ENCODE measurements at regions of chr7 and their contacts with region 1.

Region 1: GRCh38 chr7:98168181-98168905 is 42.9 kb upstream of the BHLHA15 start:
- DNase-seq: peak; percentile 71 to 82
- ATAC-seq: peak; percentile 68 to 75; a peak in 5 of 6 replicates
- H3K4me3 ChIP-seq: no peak overlapping the region
- H3K27ac ChIP-seq: no peak overlapping the region
- H3K4me1 ChIP-seq: peaks cover 3% of the 10 kb centered on the region; the same call in 1 of the 3 replicates
- CTCF ChIP-seq: peak; percentile 95
- EP300 ChIP-seq: no peak
- POLR2A ChIP-seq: no peak
- RAD21 ChIP-seq: peak; percentile 91 to 94

Region 2: GRCh38 chr7:98040626-98041360 is 127.5 kb before region 1 on chr7:
- CTCF ChIA-PET with region 1: interaction called, 10 read pairs
- POLR2A ChIA-PET with region 1: no interaction called
- DNase-seq: no peak
- ATAC-seq: no peak; a peak in 1 of 6 replicates
- H3K4me3 ChIP-seq: no peak overlapping the region
- H3K27ac ChIP-seq: no peak overlapping the region
- H3K4me1 ChIP-seq: no peaks in the 10 kb centered on the region
- CTCF ChIP-seq: no peak
- EP300 ChIP-seq: no peak
- POLR2A ChIP-seq: no peak
- RAD21 ChIP-seq: no peak

Region 3: GRCh38 chr7:98106647-98107445 is 61.5 kb before region 1 on chr7 and contains the start of gene LMTK2:
- CTCF ChIA-PET with region 1: interaction called, 80 read pairs
- POLR2A ChIA-PET with region 1: no interaction called
- DNase-seq: peak; percentile 77 to 93
- ATAC-seq: peak; percentile 97 to 98
- H3K4me3 ChIP-seq: peak within 1 kb of the TSS; percentile 90
- H3K27ac ChIP-seq: peak within 1 kb of the TSS; percentile 86 to 91
- H3K4me1 ChIP-seq: peaks cover 39% of the 10 kb centered on the region
- CTCF ChIP-seq: peak; percentile 94
- EP300 ChIP-seq: no peak
- POLR2A ChIP-seq: peak; percentile 92
- RAD21 ChIP-seq: peak; percentile 66 to 74
- polyA plus RNA-seq, gene LMTK2: 13.0 and 14.9 TPM in 2 replicates

Region 4: DNA sequence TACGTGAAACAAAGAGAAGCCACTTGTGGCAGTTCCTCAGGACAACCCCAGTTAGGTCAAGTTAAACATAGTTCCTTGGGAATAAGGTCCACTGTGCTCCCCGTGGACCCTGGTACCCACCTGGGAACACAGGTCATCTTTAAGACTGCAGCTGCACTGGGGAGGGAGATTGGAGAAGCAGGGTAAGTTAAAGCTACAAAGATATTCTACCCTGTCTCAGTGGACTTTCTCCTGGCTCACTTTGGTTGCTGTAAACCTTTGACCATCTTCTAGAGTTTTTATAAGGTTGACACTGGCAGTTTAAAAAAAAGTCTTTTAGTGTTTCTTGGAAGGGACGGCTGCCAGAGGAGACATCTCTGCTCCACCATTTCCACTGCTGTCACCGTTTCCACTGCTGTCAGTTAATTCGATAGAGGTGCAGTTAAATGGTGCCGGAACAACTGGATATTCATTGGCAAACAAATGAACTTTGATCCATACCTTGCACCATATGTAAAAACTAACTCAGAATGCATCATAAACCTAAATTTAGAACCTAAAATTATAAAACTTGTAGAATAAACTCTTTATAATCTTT is 19.1 kb before region 1 on chr7:
- CTCF ChIA-PET with region 1: interaction called, 37 read pairs
- POLR2A ChIA-PET with region 1: no interaction called
- DNase-seq: no peak
- ATAC-seq: no peak
- H3K4me3 ChIP-seq: no peak overlapping the region
- H3K27ac ChIP-seq: no peak overlapping the region
- H3K4me1 ChIP-seq: no peaks in the 10 kb centered on the region
- CTCF ChIP-seq: no peak
- EP300 ChIP-seq: no peak
- POLR2A ChIP-seq: no peak
- RAD21 ChIP-seq: no peak

Region 5: GRCh38 chr7:98178347-98178746 is 10.0 kb after region 1 on chr7:
- CTCF ChIA-PET with region 1: interaction called, 87 read pairs
- POLR2A ChIA-PET with region 1: no interaction called
- DNase-seq: peak in 1 of 2 experiments; percentile 26
- ATAC-seq: peak; percentile 8 to 42; a peak in 2 of 6 replicates
- H3K4me3 ChIP-seq: no peak overlapping the region
- H3K27ac ChIP-seq: no peak overlapping the region
- H3K4me1 ChIP-seq: no peaks in the 10 kb centered on the region
- CTCF ChIP-seq: no peak
- EP300 ChIP-seq: no peak
- POLR2A ChIP-seq: no peak
- RAD21 ChIP-seq: no peak